ENCODE measurements at regions of chr16 and their contacts with region 1.

Region 1: DNA sequence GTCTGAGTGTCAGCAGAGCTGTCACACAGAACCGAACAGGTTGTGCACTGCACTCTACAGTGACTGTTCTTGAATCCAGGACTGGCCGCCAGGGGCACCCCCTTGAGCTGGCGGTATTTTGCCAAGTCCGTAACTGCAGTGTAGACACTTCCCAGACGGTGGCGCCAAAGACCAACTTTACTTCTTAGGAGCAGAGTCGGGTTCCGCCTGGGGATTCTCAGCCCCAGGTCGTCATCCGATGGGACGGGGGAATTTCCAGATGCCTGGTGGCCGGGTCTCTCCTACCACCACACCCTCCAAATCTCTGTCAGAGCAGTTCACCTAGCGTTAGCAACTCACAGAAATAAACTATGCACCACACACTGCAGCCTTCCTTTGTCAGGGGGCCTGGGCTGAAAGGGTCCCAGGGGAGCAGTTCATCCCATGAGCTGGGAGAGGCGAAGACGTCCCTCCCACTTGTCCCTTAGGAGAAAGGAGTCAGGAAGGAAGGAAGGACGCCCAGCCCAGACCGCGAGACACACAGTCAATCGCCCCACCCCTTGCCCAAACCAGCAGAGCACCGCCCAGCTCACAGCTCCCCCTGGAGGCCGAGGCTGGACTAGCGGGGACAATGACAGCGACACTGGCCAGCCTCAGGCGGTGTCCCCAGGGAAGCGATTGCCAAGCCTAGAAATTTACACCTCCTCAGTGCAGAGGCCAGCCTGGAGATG is 7.4 kb upstream of the RIPOR1 start:
- DNase-seq: peak; percentile 100
- ATAC-seq: peak; percentile 93
- H3K4me3 Mint-ChIP-seq: peak overlapping the region; percentile 81
- H3K27ac Mint-ChIP-seq: peak overlapping the region; percentile 99
- H3K4me1 Mint-ChIP-seq: peaks cover 16% of the 10 kb centered on the region
- H3K27me3 Mint-ChIP-seq: no peaks in the 10 kb centered on the region
- CTCF ChIP-seq: peak; percentile 98

Region 2: DNA sequence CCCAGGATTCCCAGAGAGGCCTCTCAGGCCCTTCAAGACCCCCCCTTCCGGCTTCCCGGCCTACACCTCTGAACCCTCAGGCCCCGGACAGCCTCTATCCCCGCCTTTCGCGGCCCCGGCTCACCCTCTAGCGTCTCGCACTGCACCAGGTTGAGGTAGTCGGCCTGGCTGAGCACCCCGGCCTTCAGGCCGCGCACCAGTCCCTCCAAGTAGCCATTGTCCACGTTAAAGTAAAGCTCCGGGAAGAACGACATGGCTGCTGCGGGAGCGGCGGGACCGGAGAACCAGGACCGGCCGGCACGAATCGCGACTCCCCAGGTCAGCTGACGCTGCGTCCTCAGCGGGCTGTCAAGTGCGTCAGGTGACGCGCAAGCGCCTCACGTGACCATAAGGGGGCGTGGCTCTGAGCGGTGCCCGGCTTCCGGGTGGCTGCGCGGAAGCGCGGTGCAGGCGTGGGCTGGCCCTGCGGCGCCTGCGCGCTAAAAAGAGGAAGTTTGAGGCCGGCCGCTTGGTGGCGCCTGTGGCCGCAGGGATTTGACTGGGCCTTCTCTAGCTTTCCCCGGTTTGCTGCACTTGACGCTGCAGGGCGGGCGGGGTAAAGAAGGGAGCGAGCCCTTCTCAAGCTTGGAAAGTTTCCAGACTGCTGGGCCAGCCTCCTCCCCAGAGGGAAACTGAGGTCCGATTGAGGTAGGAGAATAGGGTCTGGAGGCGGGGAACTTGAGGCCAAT is 40.3 kb before region 1 on chr16 and contains the start of gene ATP6V0D1:
- CTCF ChIA-PET with region 1: interaction called, 60 read pairs
- POLR2A ChIA-PET with region 1: interaction called, 3 read pairs
- intact Hi-C with region 1: no loop called
- DNase-seq: peak; percentile 99
- ATAC-seq: peak; percentile 92
- H3K4me3 Mint-ChIP-seq: peak within 1 kb of the TSS; percentile 93
- H3K27ac Mint-ChIP-seq: peak within 1 kb of the TSS; percentile 99
- H3K4me1 Mint-ChIP-seq: peaks cover 30% of the 10 kb centered on the region
- H3K27me3 Mint-ChIP-seq: no peaks in the 10 kb centered on the region
- CTCF ChIP-seq: peak; percentile 75
- total RNA-seq, gene ATP6V0D1: 17.5 to 18.2 TPM

Region 3: DNA sequence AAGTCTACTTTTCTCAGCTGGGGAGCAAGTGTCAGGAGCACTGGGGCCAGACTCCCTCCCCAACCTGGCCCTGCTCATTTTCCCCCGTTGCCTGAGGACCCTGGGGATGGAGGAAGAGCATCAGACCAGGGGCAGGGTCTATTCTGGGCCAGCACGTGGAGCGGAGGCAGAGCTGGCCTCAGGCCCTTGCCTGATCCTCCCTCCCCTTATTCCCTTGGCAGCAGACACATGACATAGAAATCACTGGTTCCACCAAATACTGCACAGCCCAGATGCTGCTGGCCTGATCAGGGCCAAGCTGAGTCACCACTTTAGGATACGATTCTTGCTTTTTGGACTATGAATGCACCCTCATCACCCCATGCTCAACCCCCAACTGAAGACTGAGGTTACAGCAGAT is 22.1 kb before region 1 on chr16:
- CTCF ChIA-PET with region 1: interaction called, 142 read pairs
- POLR2A ChIA-PET with region 1: interaction called, 4 read pairs
- intact Hi-C with region 1: no loop called
- DNase-seq: no peak
- ATAC-seq: no peak
- H3K4me3 Mint-ChIP-seq: no peak overlapping the region
- H3K27ac Mint-ChIP-seq: no peak overlapping the region
- H3K4me1 Mint-ChIP-seq: peaks cover 10% of the 10 kb centered on the region
- H3K27me3 Mint-ChIP-seq: no peaks in the 10 kb centered on the region
- CTCF ChIP-seq: no peak

Region 4: GRCh38 chr16:67537270-67537635 is 16.0 kb after region 1 on chr16:
- CTCF ChIA-PET with region 1: interaction called, 135 read pairs
- POLR2A ChIA-PET with region 1: no interaction called
- intact Hi-C with region 1: no loop called
- DNase-seq: peak; percentile 60
- ATAC-seq: peak; percentile 55
- H3K4me3 Mint-ChIP-seq: peak overlapping the region; percentile 74
- H3K27ac Mint-ChIP-seq: peak overlapping the region; percentile 73
- H3K4me1 Mint-ChIP-seq: peaks cover 31% of the 10 kb centered on the region
- H3K27me3 Mint-ChIP-seq: peaks cover 11% of the 10 kb centered on the region
- CTCF ChIP-seq: no peak

Region 5: GRCh38 chr16:67555795-67556212 is 34.6 kb after region 1 on chr16:
- CTCF ChIA-PET with region 1: interaction called, 24 read pairs
- POLR2A ChIA-PET with region 1: interaction called, 4 read pairs
- intact Hi-C with region 1: no loop called
- DNase-seq: no peak
- ATAC-seq: peak; percentile 94
- H3K4me3 Mint-ChIP-seq: peak overlapping the region; percentile 66
- H3K27ac Mint-ChIP-seq: peak overlapping the region; percentile 100
- H3K4me1 Mint-ChIP-seq: peaks cover 51% of the 10 kb centered on the region
- H3K27me3 Mint-ChIP-seq: no peaks in the 10 kb centered on the region
- CTCF ChIP-seq: no peak

Region 6: GRCh38 chr16:67595033-67595355 is 73.7 kb after region 1 on chr16:
- CTCF ChIA-PET with region 1: interaction called, 12 read pairs
- POLR2A ChIA-PET with region 1: no interaction called
- intact Hi-C with region 1: no loop called
- DNase-seq: peak; percentile 21
- ATAC-seq: no peak
- H3K4me3 Mint-ChIP-seq: no peak overlapping the region
- H3K27ac Mint-ChIP-seq: peak overlapping the region; percentile 61
- H3K4me1 Mint-ChIP-seq: peaks cover 39% of the 10 kb centered on the region
- H3K27me3 Mint-ChIP-seq: no peaks in the 10 kb centered on the region
- CTCF ChIP-seq: no peak

Region 7: GRCh38 chr16:67641779-67642708 is 120.8 kb after region 1 on chr16:
- CTCF ChIA-PET with region 1: interaction called, 133 read pairs
- POLR2A ChIA-PET with region 1: interaction called, 13 read pairs
- intact Hi-C with region 1: no loop called
- DNase-seq: no peak
- ATAC-seq: no peak
- H3K4me3 Mint-ChIP-seq: no peak overlapping the region
- H3K27ac Mint-ChIP-seq: no peak overlapping the region
- H3K4me1 Mint-ChIP-seq: peaks cover 11% of the 10 kb centered on the region
- H3K27me3 Mint-ChIP-seq: no peaks in the 10 kb centered on the region
- CTCF ChIP-seq: no peak